ENCODE measurements at regions of chr2 and their contacts with region 1.

Region 1: DNA sequence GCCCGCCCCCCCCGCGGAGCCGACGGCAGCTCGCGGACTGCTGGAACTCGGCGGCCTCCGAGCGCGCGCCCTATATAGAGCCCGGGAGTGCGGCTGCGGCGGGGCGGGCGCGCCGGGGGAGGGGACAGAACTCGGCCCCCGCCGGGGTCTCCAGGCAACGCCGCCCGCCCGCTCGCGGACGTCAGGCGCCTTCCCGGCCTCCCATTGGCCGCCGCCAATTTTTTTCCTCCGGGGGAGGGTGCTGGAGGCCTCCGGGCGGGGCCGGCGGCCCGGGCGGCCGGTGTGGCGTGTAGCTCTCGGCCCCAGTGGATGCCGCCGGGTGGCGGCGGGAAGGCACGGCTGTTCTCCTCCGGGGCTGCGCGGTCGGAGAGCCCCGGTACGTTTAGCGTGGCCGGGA is at the start of gene ZFP36L2:
- DNase-seq: no peak
- H3K4me3 ChIP-seq: peak within 1 kb of the TSS; percentile 95
- H3K27me3 ChIP-seq: no peaks in the 10 kb centered on the region
- CTCF ChIP-seq: no peak
- polyA plus RNA-seq, gene ZFP36L2: 4.0 and 6.9 TPM in 2 replicates

Region 2: DNA sequence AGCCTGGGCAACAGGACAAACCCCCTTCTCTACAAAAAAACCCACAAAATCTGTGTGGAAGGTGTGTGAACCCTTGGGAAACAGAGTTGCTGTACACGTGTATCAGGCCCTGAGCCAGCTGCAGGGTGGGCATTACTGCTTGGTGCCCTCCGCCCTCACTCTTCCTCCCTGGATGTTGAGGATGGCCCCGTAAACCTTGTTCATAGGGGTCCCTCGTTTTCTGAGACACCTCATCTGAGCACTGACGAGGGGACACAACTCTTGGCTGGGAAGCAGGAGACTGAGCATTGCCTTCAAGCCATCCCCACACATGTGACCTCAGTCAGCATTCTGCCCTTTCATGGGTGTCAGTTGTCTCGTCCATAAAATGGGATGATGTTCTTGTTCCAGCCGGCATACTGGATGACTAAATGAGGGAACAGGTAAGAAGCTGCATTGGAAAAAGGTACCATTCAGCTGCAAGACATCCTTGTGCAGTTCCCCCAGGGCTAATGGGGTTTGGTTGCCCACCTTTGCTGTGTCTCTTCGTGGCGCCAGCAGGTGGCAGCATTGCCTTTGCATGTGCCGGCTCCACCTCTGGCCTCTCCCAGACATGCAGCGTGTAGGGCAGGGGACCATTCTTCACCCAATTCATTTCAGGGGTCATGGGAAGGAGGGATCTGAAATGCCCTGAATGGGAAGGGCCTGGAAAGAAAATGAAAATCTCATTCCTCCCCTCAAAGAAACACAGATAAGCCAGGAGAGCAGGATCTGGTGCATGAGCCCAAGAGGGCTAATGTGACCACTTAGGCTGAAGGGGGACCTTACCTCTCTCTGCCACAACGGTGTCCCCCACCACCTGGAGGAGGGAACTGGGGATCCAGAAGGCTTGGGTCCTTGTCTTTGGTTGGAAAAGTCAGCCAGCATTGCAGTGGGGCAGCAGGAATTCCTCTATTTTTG is 397.8 kb before region 1 on chr2:
- CTCF ChIA-PET with region 1: interaction called, 13 read pairs
- POLR2A ChIA-PET with region 1: no interaction called
- DNase-seq: no peak
- H3K4me3 ChIP-seq: no peak overlapping the region
- H3K27me3 ChIP-seq: no peaks in the 10 kb centered on the region
- CTCF ChIP-seq: peak; percentile 88

Region 3: DNA sequence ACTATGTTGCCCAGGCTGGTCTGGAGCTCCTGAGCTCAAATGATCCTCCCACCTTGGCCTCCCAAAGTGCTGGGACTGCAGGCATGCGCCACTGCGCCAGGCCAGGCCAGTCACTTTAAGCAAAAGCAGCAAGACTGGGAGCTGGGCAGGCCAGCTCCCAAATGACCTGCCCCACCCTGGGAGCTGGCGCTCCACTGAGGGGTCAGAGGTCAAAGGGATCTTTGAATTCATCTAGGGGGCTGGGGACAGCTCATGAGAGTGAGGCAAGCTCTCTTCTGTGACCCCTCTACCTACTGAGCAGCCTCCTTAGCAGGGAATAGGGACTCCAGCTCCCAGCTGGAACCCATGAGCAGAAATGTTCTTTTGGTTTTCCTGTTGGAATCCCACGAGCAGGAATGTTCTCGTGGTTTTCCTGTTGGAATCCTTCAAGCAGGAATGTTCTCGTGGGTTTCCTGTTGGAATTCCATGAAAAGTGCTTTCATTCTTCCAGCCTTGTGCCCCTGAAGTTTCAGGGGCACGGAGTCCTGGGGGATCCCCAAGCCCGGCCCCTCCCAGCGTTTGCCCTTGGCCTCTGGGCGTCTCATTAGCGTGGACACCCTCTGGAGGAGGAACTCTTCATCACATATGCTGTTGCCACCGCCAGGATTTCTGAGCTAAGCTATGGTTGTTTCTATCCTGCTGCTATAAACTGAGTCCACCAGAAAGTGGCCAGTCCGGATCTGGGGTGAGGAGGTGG is 272.2 kb before region 1 on chr2:
- CTCF ChIA-PET with region 1: interaction called, 21 read pairs
- POLR2A ChIA-PET with region 1: interaction called, 10 read pairs
- DNase-seq: no peak
- H3K4me3 ChIP-seq: no peak overlapping the region
- H3K27me3 ChIP-seq: no peaks in the 10 kb centered on the region
- CTCF ChIP-seq: 0 out of 2 replicates have a peak, but pooled peaks have one; percentile 10

Region 4: GRCh38 chr2:43024515-43025011 is 202.0 kb before region 1 on chr2:
- CTCF ChIA-PET with region 1: interaction called, 31 read pairs
- POLR2A ChIA-PET with region 1: no interaction called
- DNase-seq: no peak
- H3K4me3 ChIP-seq: no peak overlapping the region
- H3K27me3 ChIP-seq: no peaks in the 10 kb centered on the region
- CTCF ChIP-seq: peak; percentile 94

Region 5: GRCh38 chr2:43158259-43158880 is 68.2 kb before region 1 on chr2:
- CTCF ChIA-PET with region 1: no interaction called
- POLR2A ChIA-PET with region 1: interaction called, 14 read pairs
- DNase-seq: peak; percentile 20
- H3K4me3 ChIP-seq: no peak overlapping the region
- H3K27me3 ChIP-seq: no peaks in the 10 kb centered on the region
- CTCF ChIP-seq: no peak

Region 6: GRCh38 chr2:43537137-43537536 is 310.6 kb after region 1 on chr2:
- CTCF ChIA-PET with region 1: interaction called, 22 read pairs
- POLR2A ChIA-PET with region 1: interaction called, 3 read pairs
- DNase-seq: no peak
- H3K4me3 ChIP-seq: no peak overlapping the region
- H3K27me3 ChIP-seq: no peaks in the 10 kb centered on the region
- CTCF ChIP-seq: no peak

Region 7: GRCh38 chr2:45142227-45142866 is 1915.8 kb after region 1 on chr2:
- CTCF ChIA-PET with region 1: no interaction called
- POLR2A ChIA-PET with region 1: no interaction called
- DNase-seq: no peak
- H3K4me3 ChIP-seq: no peak overlapping the region
- H3K27me3 ChIP-seq: peaks cover 29% of the 10 kb centered on the region
- CTCF ChIP-seq: no peak

Measured in BJ (cell line).